ENCODE measurements at regions of chr1 and their contacts with region 1.

Region 1: DNA sequence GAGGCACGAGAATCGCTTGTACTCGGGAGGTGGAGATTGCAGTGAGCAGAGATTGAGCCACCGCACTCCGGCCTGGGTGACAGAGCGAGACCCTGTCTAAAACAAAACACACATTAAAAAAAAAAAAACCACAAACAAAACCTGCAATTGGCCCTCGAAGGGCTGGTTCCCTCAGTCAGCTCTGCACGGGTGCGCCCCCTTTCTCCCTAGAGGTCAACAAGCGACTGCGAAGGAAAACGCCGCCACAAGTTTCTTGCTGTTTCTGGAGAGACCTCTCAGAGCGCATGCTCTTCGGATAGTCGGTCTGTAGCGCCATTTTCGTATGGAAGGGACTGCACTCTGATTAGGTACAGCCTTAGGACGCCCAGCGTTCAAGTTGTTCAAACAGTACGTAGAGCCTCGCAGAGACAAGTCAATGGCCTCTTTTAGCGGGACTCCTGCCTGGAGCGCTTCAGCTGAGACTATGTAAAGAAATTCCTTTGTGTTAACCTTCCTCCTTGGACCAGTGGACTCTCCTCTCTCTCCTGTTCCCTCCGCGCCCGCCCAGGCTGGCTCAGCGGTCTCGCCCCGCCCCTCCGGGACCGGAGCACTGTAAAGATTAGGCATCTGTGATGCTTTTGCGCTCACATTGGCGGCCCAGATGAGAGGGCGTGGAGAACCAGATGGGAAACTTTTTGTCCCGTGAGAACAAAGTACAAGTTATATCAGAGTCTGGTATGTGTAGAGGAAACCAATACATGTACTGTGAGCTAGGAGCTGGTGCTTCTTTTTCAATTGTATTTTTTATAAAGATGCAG is 1.0 kb upstream of the CDC14A start:
- DNase-seq: peak; percentile 87
- H3K4me3 ChIP-seq: peak overlapping the region; percentile 71 to 83
- H3K27ac ChIP-seq: peak overlapping the region; percentile 92
- H3K4me1 ChIP-seq: no peaks in the 10 kb centered on the region
- H3K27me3 ChIP-seq: no peaks in the 10 kb centered on the region
- CTCF ChIP-seq: peak in 3 of 4 experiments; percentile 16 to 36 (median 35)
- POLR2A ChIP-seq: peak; percentile 76

Region 2: DNA sequence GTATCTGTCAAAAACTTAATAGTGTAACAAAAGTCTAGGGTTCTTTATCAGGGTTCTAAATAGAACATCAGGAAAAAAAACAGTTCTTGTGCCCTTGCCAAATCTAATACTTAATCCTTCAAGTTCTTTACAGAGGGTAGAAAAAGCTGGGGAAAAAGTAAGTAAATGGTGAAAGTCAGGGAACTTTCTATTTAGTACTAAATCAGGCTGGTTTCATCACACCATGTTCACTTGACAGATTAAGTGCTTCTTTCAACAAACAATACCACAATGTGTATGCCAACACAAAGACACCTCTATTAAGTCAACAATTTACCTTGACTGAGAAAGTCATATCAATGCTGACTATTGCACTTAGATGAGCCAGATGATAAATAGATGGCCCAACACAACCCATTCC is 111.3 kb before region 1 on chr1:
- intact Hi-C with region 1: no loop called
- DNase-seq: no peak
- H3K4me3 ChIP-seq: no peak overlapping the region
- H3K27ac ChIP-seq: peak overlapping the region; percentile 19 to 30
- H3K4me1 ChIP-seq: no peaks in the 10 kb centered on the region
- H3K27me3 ChIP-seq: no peaks in the 10 kb centered on the region
- CTCF ChIP-seq: no peak
- POLR2A ChIP-seq: no peak

Region 3: DNA sequence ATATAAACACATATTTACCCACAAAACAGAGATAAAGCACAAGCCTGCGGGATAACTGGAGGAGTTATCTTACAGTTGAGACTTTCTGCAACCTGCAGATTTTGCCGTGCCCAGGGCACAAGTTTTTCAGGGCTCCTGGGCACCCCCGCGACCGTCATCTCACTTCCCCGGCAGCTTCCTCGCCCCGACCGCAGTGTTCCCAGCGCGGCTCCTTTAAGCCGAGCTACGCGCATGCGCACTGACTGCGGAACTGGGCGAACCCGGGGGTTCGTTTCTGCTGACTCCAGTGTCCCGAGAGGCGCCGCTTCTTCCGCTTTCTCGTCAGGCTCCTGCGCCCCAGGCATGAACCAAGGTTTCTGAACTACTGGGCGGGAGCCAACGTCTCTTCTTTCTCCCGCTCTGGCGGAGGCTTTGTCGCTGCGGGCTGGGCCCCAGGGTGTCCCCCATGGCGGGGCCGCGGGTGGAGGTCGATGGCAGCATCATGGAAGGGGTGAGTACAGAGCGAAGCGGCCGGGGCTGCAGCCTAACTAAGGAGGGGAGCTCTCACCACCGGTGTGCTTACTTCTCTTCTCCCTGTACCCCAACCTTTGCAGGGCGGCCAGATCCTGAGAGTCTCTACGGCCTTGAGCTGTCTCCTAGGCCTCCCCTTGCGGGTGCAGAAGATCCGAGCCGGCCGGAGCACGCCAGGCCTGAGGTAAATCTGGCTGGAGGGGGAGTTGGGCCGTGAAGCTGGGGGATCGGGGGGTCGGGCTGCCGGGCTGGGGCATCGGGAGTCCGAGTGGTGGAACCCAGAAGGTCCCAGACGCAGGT is 85.2 kb before region 1 on chr1 and contains the start of gene RTCA:
- intact Hi-C with region 1: loop called (anchors 2 kb)
- DNase-seq: peak; percentile 95
- H3K4me3 ChIP-seq: peak within 1 kb of the TSS; percentile 81 to 86
- H3K27ac ChIP-seq: peak within 1 kb of the TSS; percentile 79 to 81
- H3K4me1 ChIP-seq: peaks cover 4% of the 10 kb centered on the region
- H3K27me3 ChIP-seq: no peaks in the 10 kb centered on the region
- CTCF ChIP-seq: peak in 1 of 4 experiments; percentile 14
- POLR2A ChIP-seq: peak; percentile 84
- total RNA-seq, gene RTCA: 19.8 to 22.4 TPM

Region 4: DNA sequence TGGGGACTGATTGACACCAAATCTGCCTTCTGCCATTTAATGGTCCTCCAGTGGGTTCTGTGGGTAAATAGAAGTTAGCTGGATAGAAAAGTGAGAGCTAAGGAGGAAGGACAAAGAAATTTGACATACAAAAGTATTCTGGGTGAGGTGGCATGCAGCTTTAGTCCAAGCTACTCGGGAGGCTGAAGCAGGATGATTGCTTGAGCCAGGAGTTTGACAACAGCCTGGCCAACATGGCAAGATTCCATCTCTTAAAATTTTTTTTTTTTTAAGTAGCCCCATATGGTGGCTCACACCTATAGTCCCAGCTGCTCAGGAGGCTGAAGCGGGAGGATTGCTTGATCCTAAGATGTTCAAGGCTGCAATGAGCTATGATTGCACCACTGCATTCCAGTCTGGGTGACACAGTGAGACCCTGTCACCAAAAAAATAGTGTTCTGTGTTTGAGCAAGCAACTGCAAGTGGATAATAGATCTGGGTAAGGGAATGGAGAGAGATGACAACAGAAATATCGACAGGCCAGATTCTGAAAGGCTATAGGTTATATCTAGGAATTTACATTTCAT is 71.9 kb before region 1 on chr1:
- intact Hi-C with region 1: no loop called
- DNase-seq: no peak
- H3K4me3 ChIP-seq: no peak overlapping the region
- H3K27ac ChIP-seq: no peak overlapping the region
- H3K4me1 ChIP-seq: no peaks in the 10 kb centered on the region
- H3K27me3 ChIP-seq: no peaks in the 10 kb centered on the region
- CTCF ChIP-seq: no peak
- POLR2A ChIP-seq: no peak

Region 5: DNA sequence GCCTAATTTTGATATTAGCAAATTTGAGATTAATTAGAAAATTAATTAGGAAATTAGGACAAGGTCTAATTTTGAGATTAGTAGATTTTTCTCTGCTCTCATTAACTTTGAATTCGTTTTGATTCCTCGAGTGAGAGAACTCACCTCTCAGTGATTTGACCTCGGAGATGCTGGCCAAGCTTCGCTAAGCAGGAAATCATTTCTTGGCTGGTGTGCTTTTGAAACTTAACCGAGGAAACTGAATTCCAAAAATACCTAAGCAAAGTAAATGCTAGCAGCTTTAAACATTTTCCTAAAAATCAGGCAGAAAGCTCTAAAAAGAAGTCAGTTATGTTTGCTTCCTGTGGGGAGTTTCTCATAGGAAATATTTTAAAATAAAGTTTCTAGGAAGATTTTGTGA is 35.9 kb after region 1 on chr1:
- intact Hi-C with region 1: no loop called
- DNase-seq: no peak
- H3K4me3 ChIP-seq: no peak overlapping the region
- H3K27ac ChIP-seq: peak overlapping the region in 1 of 2 donors; percentile 14
- H3K4me1 ChIP-seq: no peaks in the 10 kb centered on the region
- H3K27me3 ChIP-seq: no peaks in the 10 kb centered on the region
- CTCF ChIP-seq: no peak
- POLR2A ChIP-seq: no peak

Region 6: GRCh38 chr1:100443811-100444571 is 92.7 kb after region 1 on chr1:
- intact Hi-C with region 1: loop called (anchors 1 kb)
- DNase-seq: no peak
- H3K4me3 ChIP-seq: no peak overlapping the region
- H3K27ac ChIP-seq: peak overlapping the region; percentile 51 to 56
- H3K4me1 ChIP-seq: no peaks in the 10 kb centered on the region
- H3K27me3 ChIP-seq: no peaks in the 10 kb centered on the region
- CTCF ChIP-seq: no peak
- POLR2A ChIP-seq: no peak

Region 7: DNA sequence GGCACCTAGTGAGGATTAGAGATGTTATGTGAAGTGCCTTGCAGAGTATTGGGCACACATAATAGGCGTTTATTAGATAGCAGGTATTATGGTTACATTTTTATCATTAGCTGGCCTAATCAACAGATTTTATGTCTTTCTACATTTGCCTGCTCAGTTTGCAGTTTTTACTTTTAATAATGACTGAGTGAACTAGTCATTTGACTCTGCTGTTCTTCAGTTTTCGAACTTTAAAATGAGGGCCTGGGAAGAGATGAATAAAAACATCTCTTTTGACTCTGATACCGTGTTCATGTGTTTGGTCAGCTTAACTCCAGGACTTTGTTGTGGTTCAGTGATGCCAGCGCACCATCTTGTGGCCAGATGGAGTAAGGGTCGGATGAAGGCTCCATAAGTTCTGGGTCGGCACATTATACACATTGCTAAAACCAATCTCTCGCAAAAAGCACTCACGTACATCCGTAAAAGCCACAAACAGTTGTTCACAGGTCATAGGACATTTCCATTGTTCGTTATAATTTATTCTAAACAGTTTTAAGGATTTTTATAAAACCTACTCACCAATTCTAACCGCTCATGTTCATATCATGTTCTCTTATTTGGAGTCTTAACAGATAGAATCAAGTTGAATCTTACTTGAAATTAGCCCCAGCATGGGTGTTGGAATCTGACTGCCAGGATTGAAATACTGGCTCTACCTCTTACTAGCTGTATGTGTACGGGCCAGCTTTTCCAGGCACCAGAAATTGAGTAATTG is 108.2 kb after region 1 on chr1:
- intact Hi-C with region 1: loop called (anchors 5 kb)
- DNase-seq: peak; percentile 76
- H3K4me3 ChIP-seq: no peak overlapping the region
- H3K27ac ChIP-seq: peak overlapping the region in 1 of 2 donors; percentile 39
- H3K4me1 ChIP-seq: peaks cover 3% of the 10 kb centered on the region
- H3K27me3 ChIP-seq: no peaks in the 10 kb centered on the region
- CTCF ChIP-seq: peak; percentile 58 to 89 (median 82)
- POLR2A ChIP-seq: no peak

Measured in prostate gland (tissue), 2 donors.